ENCODE measurements at regions of chr1 and their contacts with region 1.

Region 1: DNA sequence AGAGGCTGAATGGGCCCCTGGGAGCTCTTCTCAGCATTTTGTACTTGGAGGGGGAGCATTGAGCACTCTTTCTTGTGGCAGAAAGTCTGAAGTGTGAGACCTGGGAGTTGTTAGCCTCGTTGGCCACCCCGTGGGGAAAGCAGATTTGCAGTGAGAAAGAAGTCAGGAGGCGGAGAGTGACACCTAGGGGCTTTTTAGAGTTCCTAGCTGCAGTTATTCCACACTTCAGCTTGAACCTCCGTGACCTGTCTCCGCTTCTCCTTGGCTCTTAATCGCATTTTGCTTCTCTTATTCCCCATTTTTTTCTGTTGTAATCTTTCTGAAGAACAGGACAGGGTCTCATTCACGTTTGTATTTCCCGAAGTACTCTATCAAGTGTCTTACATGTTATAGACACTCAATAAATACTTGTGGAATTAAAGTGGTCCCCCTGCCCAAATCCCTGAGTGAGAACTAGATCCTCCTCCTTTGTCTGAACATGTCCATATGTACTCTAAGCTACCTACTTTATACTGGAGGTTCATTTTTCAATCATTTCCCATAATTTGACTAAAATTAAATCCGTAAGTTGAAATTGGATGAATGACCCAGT is 14.5 kb upstream of the C1orf141 start:
- DNase-seq: peak; percentile 77
- H3K4me3 ChIP-seq: no peak overlapping the region
- H3K27ac ChIP-seq: no peak overlapping the region
- H3K4me1 ChIP-seq: peaks cover 0 to 12% (median 9%) of the 10 kb centered on the region in 6 donors
- H3K27me3 ChIP-seq: peaks cover 0 to 4% (median 0%) of the 10 kb centered on the region in 7 donors
- CTCF ChIP-seq: peak; percentile 36 to 75 (median 63)
- POLR2A ChIP-seq: no peak

Region 2: GRCh38 chr1:66993071-66993470 is 156.2 kb before region 1 on chr1:
- intact Hi-C with region 1: loop called (anchors 5 kb)
- DNase-seq: no peak
- H3K4me3 ChIP-seq: no peak overlapping the region
- H3K27ac ChIP-seq: no peak overlapping the region
- H3K4me1 ChIP-seq: peaks cover 0 to 11% (median 5%) of the 10 kb centered on the region in 6 donors
- H3K27me3 ChIP-seq: no peaks in the 10 kb centered on the region
- CTCF ChIP-seq: no peak
- POLR2A ChIP-seq: no peak

Region 3: GRCh38 chr1:67041841-67042503 is 107.3 kb before region 1 on chr1:
- intact Hi-C with region 1: no loop called
- DNase-seq: no peak
- H3K4me3 ChIP-seq: no peak overlapping the region
- H3K27ac ChIP-seq: no peak overlapping the region
- H3K4me1 ChIP-seq: peaks cover 0 to 7% (median 0%) of the 10 kb centered on the region in 6 donors
- H3K27me3 ChIP-seq: no peaks in the 10 kb centered on the region
- CTCF ChIP-seq: no peak
- POLR2A ChIP-seq: no peak